ENCODE measurements at regions of chr18 and their contacts with region 1.

Region 1: DNA sequence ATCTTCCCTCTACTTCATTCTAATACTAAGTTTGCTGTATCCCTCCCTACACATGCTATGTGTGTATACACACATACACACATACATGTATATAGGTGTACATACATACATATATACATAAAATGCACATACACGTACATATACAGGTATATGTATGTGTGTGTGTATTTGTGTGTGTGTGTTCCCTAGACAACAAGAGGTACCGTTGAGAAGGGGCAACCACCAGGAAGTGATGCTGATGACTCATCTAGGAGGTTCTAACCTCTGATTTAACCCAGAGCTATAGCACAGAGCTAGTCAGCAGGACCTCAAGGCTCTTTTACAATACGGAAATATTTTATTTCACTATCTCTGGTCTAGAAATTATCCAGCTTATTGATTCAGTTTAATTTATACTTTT is 139.2 kb downstream of the LAMA3 start:
- DNase-seq: no peak
- ATAC-seq: no peak
- H3K4me3 ChIP-seq: no peak overlapping the region
- H3K27ac ChIP-seq: no peak overlapping the region
- H3K4me1 ChIP-seq: peaks cover 13% of the 10 kb centered on the region
- H3K27me3 ChIP-seq: no peaks in the 10 kb centered on the region
- CTCF ChIP-seq: no peak

Region 2: GRCh38 chr18:23918401-23919032 is 90.1 kb after region 1 on chr18:
- intact Hi-C with region 1: loop called in 1 of 2 experiments (anchors 10 kb)
- DNase-seq: peak; percentile 69 to 79
- ATAC-seq: peak in 3 of 4 donors; percentile 58 to 80 (median 68)
- H3K4me3 ChIP-seq: no peak overlapping the region
- H3K27ac ChIP-seq: no peak overlapping the region
- H3K4me1 ChIP-seq: no peaks in the 10 kb centered on the region
- H3K27me3 ChIP-seq: no peaks in the 10 kb centered on the region
- CTCF ChIP-seq: peak; percentile 73

Region 3: DNA sequence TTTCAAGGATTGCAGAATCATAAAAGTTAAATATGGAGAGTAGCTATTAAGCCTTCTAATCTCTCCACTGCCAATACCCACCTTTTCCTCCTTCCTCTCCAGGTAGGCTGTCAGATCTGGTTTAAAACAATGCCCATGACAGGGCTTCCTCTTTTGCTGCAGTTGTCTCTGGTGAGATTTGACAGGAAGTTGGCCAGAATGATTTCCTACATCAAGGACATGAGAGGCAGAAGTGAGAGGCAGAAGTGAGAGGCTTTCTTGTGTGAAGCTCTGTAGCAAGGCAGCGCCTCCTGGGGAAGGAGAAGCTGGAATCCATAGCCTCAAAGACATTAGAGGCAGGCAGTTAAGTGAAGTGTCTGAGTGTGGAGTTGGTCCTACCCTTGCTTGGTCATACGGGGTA is 1017.7 kb after region 1 on chr18:
- intact Hi-C with region 1: no loop called
- DNase-seq: no peak
- ATAC-seq: no peak
- H3K4me3 ChIP-seq: no peak overlapping the region
- H3K27ac ChIP-seq: no peak overlapping the region
- H3K4me1 ChIP-seq: no peaks in the 10 kb centered on the region
- H3K27me3 ChIP-seq: no peaks in the 10 kb centered on the region
- CTCF ChIP-seq: no peak